Transverse colon (tissue), 4 donors: ENCODE measurements at regions of chr2 and their contacts with region 1.

Region 1: GRCh38 chr2:218727502-218728165 is 17.0 kb downstream of the TTLL4 start:
- DNase-seq: no peak
- H3K4me3 ChIP-seq: no peak overlapping the region
- H3K27ac ChIP-seq: no peak overlapping the region
- H3K4me1 ChIP-seq: peaks cover 3 to 18% (median 15%) of the 10 kb centered on the region in 4 donors
- H3K27me3 ChIP-seq: no peaks in the 10 kb centered on the region
- CTCF ChIP-seq: peak; percentile 35 to 48 (median 38)
- EP300 ChIP-seq: no peak
- POLR2A ChIP-seq: no peak

Region 2: DNA sequence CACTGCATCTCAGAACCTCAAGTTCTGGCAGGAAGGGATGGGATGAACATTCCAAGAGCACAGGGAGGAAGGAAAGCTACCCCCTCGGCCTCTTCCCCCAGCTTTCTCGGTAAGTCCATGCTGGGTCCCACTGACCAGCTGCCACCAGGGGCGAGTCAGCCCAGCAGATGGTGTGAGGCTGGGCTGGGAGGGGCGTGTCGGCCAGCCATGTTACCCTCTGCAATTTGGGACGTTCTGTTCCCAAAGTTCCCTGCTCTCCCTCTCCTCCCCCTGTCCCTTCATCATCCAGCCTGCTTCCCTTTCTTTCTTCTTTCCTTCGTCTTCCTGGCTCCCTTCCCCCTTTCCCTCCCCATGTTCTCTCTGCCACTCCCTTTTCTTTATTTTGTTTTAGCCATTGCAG is 1793.5 kb before region 1 on chr2:
- in situ Hi-C with region 1: no loop called
- intact Hi-C with region 1: loop called (anchors 5 kb)
- DNase-seq: no peak
- H3K4me3 ChIP-seq: no peak overlapping the region
- H3K27ac ChIP-seq: no peak overlapping the region
- H3K4me1 ChIP-seq: no peaks in the 10 kb centered on the region
- H3K27me3 ChIP-seq: no peaks in the 10 kb centered on the region
- CTCF ChIP-seq: no peak
- EP300 ChIP-seq: no peak
- POLR2A ChIP-seq: no peak

Region 3: GRCh38 chr2:218252509-218253231 is 475.0 kb before region 1 on chr2:
- in situ Hi-C with region 1: no loop called
- intact Hi-C with region 1: no loop called
- DNase-seq: no peak
- H3K4me3 ChIP-seq: no peak overlapping the region
- H3K27ac ChIP-seq: no peak overlapping the region
- H3K4me1 ChIP-seq: no peaks in the 10 kb centered on the region
- H3K27me3 ChIP-seq: no peaks in the 10 kb centered on the region
- CTCF ChIP-seq: no peak
- EP300 ChIP-seq: no peak
- POLR2A ChIP-seq: no peak

Region 4: GRCh38 chr2:218927422-218927821 is 199.8 kb after region 1 on chr2:
- in situ Hi-C with region 1: no loop called
- intact Hi-C with region 1: no loop called
- DNase-seq: no peak
- H3K4me3 ChIP-seq: no peak overlapping the region
- H3K27ac ChIP-seq: no peak overlapping the region
- H3K4me1 ChIP-seq: no peaks in the 10 kb centered on the region
- H3K27me3 ChIP-seq: peaks cover 5% of the 10 kb centered on the region
- CTCF ChIP-seq: no peak
- EP300 ChIP-seq: no peak
- POLR2A ChIP-seq: no peak